MCF 10A (cell line): ENCODE measurements at regions of chr15 and their contacts with region 1.

Region 1: DNA sequence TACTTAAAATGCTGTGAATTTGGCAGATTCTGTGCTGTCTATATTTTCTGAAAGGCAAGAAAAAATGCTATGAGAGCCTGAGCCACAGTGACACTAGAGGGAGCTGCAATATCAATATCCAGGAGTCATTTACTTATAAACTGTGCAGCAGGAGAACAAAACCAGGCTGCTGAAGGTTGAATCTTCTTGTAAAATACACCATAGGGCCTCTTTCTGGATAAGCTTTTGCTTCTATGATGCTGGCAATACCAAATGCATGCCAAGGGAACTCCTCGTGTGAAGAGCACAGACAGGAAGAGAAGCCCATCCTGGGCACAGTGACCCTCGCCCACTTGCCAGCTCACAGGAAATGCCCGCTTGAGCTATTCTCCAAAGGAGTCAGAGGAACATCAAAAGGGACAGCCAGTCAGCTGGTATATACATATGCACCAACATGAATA is 48.0 kb upstream of the TSPAN3 start:
- DNase-seq: peak; percentile 66
- H3K4me3 Mint-ChIP-seq: no peak overlapping the region
- H3K27ac Mint-ChIP-seq: no peak overlapping the region
- H3K4me1 Mint-ChIP-seq: no peaks in the 10 kb centered on the region
- H3K27me3 Mint-ChIP-seq: no peaks in the 10 kb centered on the region
- CTCF ChIP-seq: peak; percentile 64

Region 2: GRCh38 chr15:77024271-77025082 is 94.4 kb before region 1 on chr15:
- CTCF ChIA-PET with region 1: no interaction called
- POLR2A ChIA-PET with region 1: no interaction called
- intact Hi-C with region 1: loop called (anchors 5 kb)
- DNase-seq: peak; percentile 53
- H3K4me3 Mint-ChIP-seq: no peak overlapping the region
- H3K27ac Mint-ChIP-seq: no peak overlapping the region
- H3K4me1 Mint-ChIP-seq: peaks cover 9% of the 10 kb centered on the region
- H3K27me3 Mint-ChIP-seq: no peaks in the 10 kb centered on the region
- CTCF ChIP-seq: peak; percentile 97

Region 3: DNA sequence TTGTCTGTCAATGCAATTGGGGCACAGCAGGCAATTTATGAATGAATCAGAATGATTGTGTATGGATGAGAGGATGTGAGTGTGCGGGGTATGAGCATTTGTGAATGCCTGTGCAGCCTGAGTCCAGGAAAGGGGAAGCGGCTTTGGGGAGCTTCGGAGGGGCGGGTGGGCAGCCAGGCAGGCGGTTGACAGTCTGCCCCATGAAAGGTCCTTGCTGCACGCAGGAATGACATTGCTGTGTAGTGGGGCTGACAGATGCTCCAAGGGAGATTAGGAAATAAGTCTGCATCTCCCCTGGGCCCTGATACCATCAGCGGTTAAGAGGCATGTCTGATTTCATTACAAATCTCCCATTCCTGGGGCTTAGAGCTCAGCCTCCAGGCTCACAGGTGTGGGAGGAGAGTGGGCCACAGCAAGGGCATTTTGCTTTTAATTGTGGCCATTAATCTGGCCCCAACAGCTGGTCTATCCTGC is 21.6 kb before region 1 on chr15:
- CTCF ChIA-PET with region 1: interaction called, 12 read pairs
- POLR2A ChIA-PET with region 1: no interaction called
- intact Hi-C with region 1: no loop called
- DNase-seq: no peak
- H3K4me3 Mint-ChIP-seq: no peak overlapping the region
- H3K27ac Mint-ChIP-seq: no peak overlapping the region
- H3K4me1 Mint-ChIP-seq: peaks cover 7% of the 10 kb centered on the region
- H3K27me3 Mint-ChIP-seq: no peaks in the 10 kb centered on the region
- CTCF ChIP-seq: no peak

Region 4: GRCh38 chr15:77107531-77108355 is 11.2 kb before region 1 on chr15:
- CTCF ChIA-PET with region 1: interaction called, 10 read pairs
- POLR2A ChIA-PET with region 1: no interaction called
- intact Hi-C with region 1: no loop called
- DNase-seq: peak; percentile 47
- H3K4me3 Mint-ChIP-seq: no peak overlapping the region
- H3K27ac Mint-ChIP-seq: no peak overlapping the region
- H3K4me1 Mint-ChIP-seq: no peaks in the 10 kb centered on the region
- H3K27me3 Mint-ChIP-seq: no peaks in the 10 kb centered on the region
- CTCF ChIP-seq: peak; percentile 44

Region 5: DNA sequence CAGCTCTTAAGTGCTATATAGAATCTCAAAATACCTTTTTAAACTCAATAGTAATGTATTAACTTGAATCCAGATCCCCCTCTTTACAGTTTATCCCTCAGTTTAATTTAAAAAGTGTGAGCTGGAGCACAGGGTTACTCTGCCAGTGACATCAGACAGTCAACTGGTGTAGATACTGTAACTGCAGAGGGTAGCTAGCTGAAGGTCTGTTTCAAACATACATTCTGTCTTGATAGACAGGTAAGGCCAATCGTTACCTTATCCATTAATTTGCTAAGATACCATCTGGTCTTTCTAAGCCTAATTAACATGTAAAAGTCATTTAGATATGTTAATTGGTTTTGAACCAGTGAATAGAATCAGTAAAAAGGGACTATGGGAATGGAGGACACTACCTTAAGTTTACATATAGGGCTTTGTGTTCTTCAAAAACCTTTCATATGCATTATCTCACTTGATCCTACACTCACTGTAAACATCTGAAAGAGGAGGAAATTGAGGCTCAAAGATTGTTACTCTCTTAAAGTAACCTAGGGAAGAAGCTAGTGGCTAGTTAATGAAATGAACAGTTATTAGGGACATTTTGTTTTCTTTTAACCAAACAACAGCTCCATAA is 11.5 kb after region 1 on chr15:
- CTCF ChIA-PET with region 1: interaction called, 10 read pairs
- POLR2A ChIA-PET with region 1: no interaction called
- intact Hi-C with region 1: no loop called
- DNase-seq: no peak
- H3K4me3 Mint-ChIP-seq: no peak overlapping the region
- H3K27ac Mint-ChIP-seq: no peak overlapping the region
- H3K4me1 Mint-ChIP-seq: no peaks in the 10 kb centered on the region
- H3K27me3 Mint-ChIP-seq: no peaks in the 10 kb centered on the region
- CTCF ChIP-seq: no peak

Region 6: DNA sequence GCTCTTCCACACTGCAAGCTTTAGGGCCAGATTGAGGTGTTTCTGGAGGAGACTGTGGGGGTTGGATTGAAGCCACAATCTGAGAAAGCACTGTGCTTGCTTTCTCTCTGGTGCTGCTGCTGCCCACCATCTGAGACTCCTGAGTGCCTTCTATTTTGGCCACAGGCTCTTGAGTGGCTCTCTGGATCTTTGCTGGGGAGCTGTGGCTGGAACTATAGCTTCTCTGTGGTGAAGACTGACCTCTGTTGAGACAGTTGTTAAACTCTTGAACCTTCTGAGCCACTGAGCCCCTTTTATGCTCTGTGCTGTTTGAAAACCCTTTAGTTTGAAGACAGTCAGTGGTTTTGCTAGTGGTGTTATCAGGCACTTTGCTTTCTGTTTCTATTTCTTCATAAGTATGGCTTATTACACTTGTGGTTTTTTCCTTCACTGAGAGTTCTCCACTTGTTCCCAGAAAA is 60.7 kb after region 1 on chr15:
- CTCF ChIA-PET with region 1: no interaction called
- POLR2A ChIA-PET with region 1: no interaction called
- intact Hi-C with region 1: no loop called
- DNase-seq: no peak
- H3K4me3 Mint-ChIP-seq: no peak overlapping the region
- H3K27ac Mint-ChIP-seq: no peak overlapping the region
- H3K4me1 Mint-ChIP-seq: no peaks in the 10 kb centered on the region
- H3K27me3 Mint-ChIP-seq: no peaks in the 10 kb centered on the region
- CTCF ChIP-seq: no peak

Region 7: DNA sequence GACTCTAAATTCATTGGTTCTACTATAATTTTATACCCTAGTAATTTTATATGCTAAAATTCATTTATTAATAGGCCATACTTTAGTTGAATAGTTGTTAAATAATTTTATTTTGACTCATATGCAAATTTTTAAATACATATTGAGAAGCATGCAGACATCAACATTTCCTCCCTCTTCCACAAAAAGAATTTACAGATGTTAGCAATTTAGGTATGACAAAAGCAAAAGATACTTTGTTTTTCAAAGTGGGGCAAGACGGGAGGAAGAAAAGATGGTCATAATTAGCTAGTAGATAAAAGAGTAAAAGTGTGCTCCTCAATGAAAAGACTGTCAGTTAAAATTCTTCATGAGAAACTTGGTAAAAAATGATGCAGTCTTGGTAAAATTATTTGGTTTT is 100.9 kb after region 1 on chr15:
- CTCF ChIA-PET with region 1: no interaction called
- POLR2A ChIA-PET with region 1: no interaction called
- intact Hi-C with region 1: no loop called
- DNase-seq: no peak
- H3K4me3 Mint-ChIP-seq: no peak overlapping the region
- H3K27ac Mint-ChIP-seq: no peak overlapping the region
- H3K4me1 Mint-ChIP-seq: no peaks in the 10 kb centered on the region
- H3K27me3 Mint-ChIP-seq: no peaks in the 10 kb centered on the region
- CTCF ChIP-seq: no peak